Esophagus muscularis mucosa (tissue), 4 donors: ENCODE measurements at regions of chr2 and their contacts with region 1.

Region 1: DNA sequence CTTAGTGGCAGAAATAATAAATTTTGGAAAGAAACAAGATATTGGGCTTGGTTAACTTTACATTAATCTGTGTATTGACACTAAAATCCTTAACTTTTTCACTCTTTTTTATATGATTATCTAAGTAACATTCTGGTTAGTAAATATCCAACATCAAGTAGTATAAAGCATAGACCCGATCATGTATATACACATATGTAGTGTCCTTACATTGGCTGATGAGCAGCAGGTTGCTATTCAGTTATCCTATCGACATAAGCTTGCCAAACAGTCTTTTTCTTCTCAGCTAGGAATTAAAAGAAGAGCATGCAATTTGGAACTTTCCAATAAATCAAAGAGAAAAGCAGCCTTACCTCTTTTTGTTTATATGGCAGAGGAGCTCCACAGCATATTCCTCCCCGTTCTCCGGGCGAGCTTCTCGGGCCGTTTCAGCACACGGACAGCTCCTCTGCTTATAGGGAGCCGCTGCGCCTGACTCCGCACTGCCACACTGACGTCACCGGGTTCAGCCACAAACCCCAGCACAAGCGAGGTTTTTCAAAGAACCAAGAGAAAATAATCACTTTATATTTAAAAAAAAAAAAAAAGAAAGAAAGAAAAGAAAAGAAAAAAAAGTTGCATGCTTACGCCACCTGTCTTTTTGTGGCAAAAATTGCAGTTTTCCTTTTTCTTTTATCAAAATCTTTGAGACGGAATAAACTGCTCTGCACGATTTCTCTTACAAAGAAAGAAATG is at the start of gene SCG2:
- DNase-seq: no peak
- H3K4me3 ChIP-seq: peak within 1 kb of the TSS in 2 of 4 donors; percentile 1 to 18
- H3K27ac ChIP-seq: no peak within 1 kb of the TSS
- H3K4me1 ChIP-seq: peaks cover 0 to 4% (median 4%) of the 10 kb centered on the region in 4 donors
- H3K27me3 ChIP-seq: no peaks in the 10 kb centered on the region
- CTCF ChIP-seq: peak in 2 of 3 experiments; percentile 35 to 45
- EP300 ChIP-seq: no peak
- POLR2A ChIP-seq: no peak
- total RNA-seq, gene SCG2: 1.7 to 8.3 (median 3.0) TPM

Region 2: DNA sequence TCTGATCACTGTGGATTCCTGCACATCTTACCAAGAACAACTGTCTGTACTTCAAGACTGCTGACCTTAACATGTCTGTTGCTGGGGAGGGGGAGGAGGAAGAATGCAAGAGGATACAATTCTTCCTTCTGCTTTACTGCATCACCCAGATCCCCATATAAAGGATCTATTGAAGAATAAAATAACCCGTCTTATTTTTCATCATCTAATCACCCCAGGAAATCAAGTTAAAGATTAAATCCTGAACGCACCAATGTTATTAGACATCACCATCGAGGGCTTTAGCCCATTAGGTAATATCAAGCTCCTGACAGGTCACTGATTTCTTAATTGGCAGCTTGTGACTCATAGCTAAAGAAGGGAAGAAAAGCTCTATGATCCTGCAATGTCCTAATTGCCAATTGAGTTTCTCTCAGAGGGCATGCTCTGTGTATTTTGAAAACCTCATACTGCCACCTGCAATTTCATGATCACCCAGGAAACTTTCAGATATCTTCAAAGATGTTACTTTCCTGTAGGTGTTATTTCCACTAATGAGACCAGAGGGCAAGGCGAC is 625.5 kb before region 1 on chr2:
- intact Hi-C with region 1: loop called (anchors 5 kb)
- DNase-seq: no peak
- H3K4me3 ChIP-seq: no peak overlapping the region
- H3K27ac ChIP-seq: no peak overlapping the region
- H3K4me1 ChIP-seq: peaks cover 7 to 17% (median 9%) of the 10 kb centered on the region in 4 donors
- H3K27me3 ChIP-seq: no peaks in the 10 kb centered on the region
- CTCF ChIP-seq: no peak
- EP300 ChIP-seq: no peak
- POLR2A ChIP-seq: no peak

Region 3: GRCh38 chr2:223641097-223641496 is 39.0 kb after region 1 on chr2:
- intact Hi-C with region 1: no loop called
- DNase-seq: no peak
- H3K4me3 ChIP-seq: no peak overlapping the region
- H3K27ac ChIP-seq: no peak overlapping the region
- H3K4me1 ChIP-seq: peaks cover 0 to 9% (median 6%) of the 10 kb centered on the region in 4 donors
- H3K27me3 ChIP-seq: no peaks in the 10 kb centered on the region
- CTCF ChIP-seq: no peak
- EP300 ChIP-seq: no peak
- POLR2A ChIP-seq: no peak